Activated CD8-positive, alpha-beta T cell treated with anti-CD3 and anti-CD28 coated beads for 36 hours (primary cell): ENCODE measurements at regions of chr6 and their contacts with region 1.

Region 1: GRCh38 chr6:110873981-110874879 is at the start of gene AMD1:
- DNase-seq: peak; percentile 96
- ATAC-seq: peak; percentile 80
- H3K4me3 Mint-ChIP-seq: peak within 1 kb of the TSS; percentile 97
- H3K27ac Mint-ChIP-seq: peak within 1 kb of the TSS; percentile 98
- H3K4me1 Mint-ChIP-seq: peaks cover 23% of the 10 kb centered on the region
- H3K27me3 Mint-ChIP-seq: peaks cover 2% of the 10 kb centered on the region
- CTCF ChIP-seq: no peak
- total RNA-seq, gene AMD1: 77.4 to 85.0 TPM

Region 2: DNA sequence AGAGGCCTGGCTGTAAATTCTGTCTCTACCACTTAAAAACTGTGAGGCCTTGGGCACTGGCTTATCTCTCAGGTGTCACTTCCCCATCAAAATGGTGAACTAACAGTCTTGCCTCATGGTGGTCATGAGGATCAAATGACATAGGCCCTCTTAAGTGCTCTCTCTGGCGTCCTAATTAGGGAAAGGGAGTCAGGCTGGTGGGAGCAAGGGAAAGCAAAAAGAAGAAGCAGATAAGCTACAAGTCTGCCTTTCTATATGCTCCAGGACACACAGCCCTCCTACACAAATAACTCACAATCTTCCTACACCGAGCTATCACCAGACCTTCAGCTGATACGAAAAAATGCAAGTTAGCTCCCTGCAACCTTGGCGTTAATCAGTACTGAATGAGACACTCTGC is 378.3 kb before region 1 on chr6:
- CTCF ChIA-PET with region 1: no interaction called
- POLR2A ChIA-PET with region 1: no interaction called
- intact Hi-C with region 1: no loop called
- DNase-seq: no peak
- ATAC-seq: no peak
- H3K4me3 Mint-ChIP-seq: no peak overlapping the region
- H3K27ac Mint-ChIP-seq: no peak overlapping the region
- H3K4me1 Mint-ChIP-seq: peaks cover 15% of the 10 kb centered on the region
- H3K27me3 Mint-ChIP-seq: peaks cover 7% of the 10 kb centered on the region
- CTCF ChIP-seq: no peak

Region 3: GRCh38 chr6:110815217-110816109 is 58.8 kb before region 1 on chr6 and contains the start of gene CDK19:
- CTCF ChIA-PET with region 1: interaction called, 20 read pairs
- POLR2A ChIA-PET with region 1: interaction called, 241 read pairs
- intact Hi-C with region 1: loop called (anchors 1 kb)
- DNase-seq: peak; percentile 99
- ATAC-seq: peak; percentile 82
- H3K4me3 Mint-ChIP-seq: peak within 1 kb of the TSS; percentile 99
- H3K27ac Mint-ChIP-seq: peak within 1 kb of the TSS; percentile 99
- H3K4me1 Mint-ChIP-seq: peaks cover 28% of the 10 kb centered on the region
- H3K27me3 Mint-ChIP-seq: peaks cover 3% of the 10 kb centered on the region
- CTCF ChIP-seq: no peak
- total RNA-seq, gene CDK19: 11.8 to 13.1 TPM

Region 4: DNA sequence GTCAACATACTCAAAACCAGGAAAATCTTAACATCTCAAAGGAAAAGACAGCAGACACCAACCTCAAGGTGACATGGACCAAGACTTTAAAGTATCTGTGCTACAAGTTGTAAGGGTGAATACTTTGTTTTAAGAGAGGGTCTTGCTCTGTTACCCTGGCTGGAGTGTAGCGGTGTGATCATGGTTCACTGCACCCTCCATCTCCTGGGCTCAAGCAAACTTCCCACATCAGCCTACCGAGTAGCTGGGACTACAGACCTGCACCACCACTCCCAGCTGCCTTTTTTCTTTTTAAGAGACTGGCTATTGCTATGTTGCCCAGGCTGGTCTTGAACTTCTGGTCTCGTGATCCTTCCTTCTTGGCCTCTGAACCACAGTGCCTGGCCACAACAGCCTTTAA is 10.1 kb after region 1 on chr6:
- CTCF ChIA-PET with region 1: interaction called, 5 read pairs
- POLR2A ChIA-PET with region 1: interaction called, 54 read pairs
- intact Hi-C with region 1: no loop called
- DNase-seq: no peak
- ATAC-seq: no peak
- H3K4me3 Mint-ChIP-seq: no peak overlapping the region
- H3K27ac Mint-ChIP-seq: peak overlapping the region; percentile 67
- H3K4me1 Mint-ChIP-seq: peaks cover 80% of the 10 kb centered on the region
- H3K27me3 Mint-ChIP-seq: no peaks in the 10 kb centered on the region
- CTCF ChIP-seq: no peak

Region 5: DNA sequence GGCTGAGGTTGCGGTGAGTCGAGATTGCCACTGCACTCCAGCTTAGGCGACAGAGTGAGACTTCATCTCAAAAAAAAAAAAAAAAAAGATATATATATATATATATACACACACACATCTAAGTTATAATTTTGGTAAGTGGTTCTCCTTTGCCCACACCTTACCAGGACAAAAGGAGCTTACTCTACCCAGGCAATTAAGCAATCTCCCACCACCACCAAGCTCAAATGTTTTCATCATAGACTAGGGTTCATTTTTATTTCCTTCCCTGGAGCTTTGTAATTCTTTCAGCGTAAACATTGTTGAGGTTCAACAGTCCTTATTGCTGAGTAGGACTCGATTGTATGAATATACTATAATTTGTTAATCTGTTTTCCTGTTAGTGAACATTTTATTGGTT is 23.9 kb after region 1 on chr6:
- CTCF ChIA-PET with region 1: no interaction called
- POLR2A ChIA-PET with region 1: interaction called, 18 read pairs
- intact Hi-C with region 1: no loop called
- DNase-seq: no peak
- ATAC-seq: no peak
- H3K4me3 Mint-ChIP-seq: no peak overlapping the region
- H3K27ac Mint-ChIP-seq: peak overlapping the region; percentile 46
- H3K4me1 Mint-ChIP-seq: peaks cover 4% of the 10 kb centered on the region
- H3K27me3 Mint-ChIP-seq: no peaks in the 10 kb centered on the region
- CTCF ChIP-seq: no peak

Region 6: GRCh38 chr6:110949679-110950285 is 75.6 kb after region 1 on chr6:
- CTCF ChIA-PET with region 1: interaction called, 10 read pairs
- POLR2A ChIA-PET with region 1: interaction called, 40 read pairs
- intact Hi-C with region 1: loop called (anchors 5 kb)
- DNase-seq: no peak
- ATAC-seq: no peak
- H3K4me3 Mint-ChIP-seq: no peak overlapping the region
- H3K27ac Mint-ChIP-seq: no peak overlapping the region
- H3K4me1 Mint-ChIP-seq: peaks cover 2% of the 10 kb centered on the region
- H3K27me3 Mint-ChIP-seq: no peaks in the 10 kb centered on the region
- CTCF ChIP-seq: peak; percentile 69

Region 7: GRCh38 chr6:110981202-110981600 is 107.0 kb after region 1 on chr6:
- CTCF ChIA-PET with region 1: interaction called, 7 read pairs
- POLR2A ChIA-PET with region 1: interaction called, 30 read pairs
- intact Hi-C with region 1: no loop called
- DNase-seq: no peak
- ATAC-seq: no peak
- H3K4me3 Mint-ChIP-seq: peak overlapping the region; percentile 97
- H3K27ac Mint-ChIP-seq: peak overlapping the region; percentile 97
- H3K4me1 Mint-ChIP-seq: peaks cover 40% of the 10 kb centered on the region
- H3K27me3 Mint-ChIP-seq: no peaks in the 10 kb centered on the region
- CTCF ChIP-seq: no peak